Cardiac septum (tissue), 1 donor: ENCODE measurements at regions of chr21 and their contacts with region 1.

Region 1: GRCh38 chr21:24895885-24896734 is 711.2 kb downstream of the MRPL39 start:
- DNase-seq: no peak

Region 2: GRCh38 chr21:24823247-24823646 is 72.9 kb before region 1 on chr21:
- intact Hi-C with region 1: no loop called
- DNase-seq: no peak

Region 3: GRCh38 chr21:25385911-25386474 is 489.9 kb after region 1 on chr21:
- intact Hi-C with region 1: loop called (anchors 10 kb)
- DNase-seq: no peak